Calu3 (cell line): ENCODE measurements at regions of chr7 and their contacts with region 1.

Region 1: DNA sequence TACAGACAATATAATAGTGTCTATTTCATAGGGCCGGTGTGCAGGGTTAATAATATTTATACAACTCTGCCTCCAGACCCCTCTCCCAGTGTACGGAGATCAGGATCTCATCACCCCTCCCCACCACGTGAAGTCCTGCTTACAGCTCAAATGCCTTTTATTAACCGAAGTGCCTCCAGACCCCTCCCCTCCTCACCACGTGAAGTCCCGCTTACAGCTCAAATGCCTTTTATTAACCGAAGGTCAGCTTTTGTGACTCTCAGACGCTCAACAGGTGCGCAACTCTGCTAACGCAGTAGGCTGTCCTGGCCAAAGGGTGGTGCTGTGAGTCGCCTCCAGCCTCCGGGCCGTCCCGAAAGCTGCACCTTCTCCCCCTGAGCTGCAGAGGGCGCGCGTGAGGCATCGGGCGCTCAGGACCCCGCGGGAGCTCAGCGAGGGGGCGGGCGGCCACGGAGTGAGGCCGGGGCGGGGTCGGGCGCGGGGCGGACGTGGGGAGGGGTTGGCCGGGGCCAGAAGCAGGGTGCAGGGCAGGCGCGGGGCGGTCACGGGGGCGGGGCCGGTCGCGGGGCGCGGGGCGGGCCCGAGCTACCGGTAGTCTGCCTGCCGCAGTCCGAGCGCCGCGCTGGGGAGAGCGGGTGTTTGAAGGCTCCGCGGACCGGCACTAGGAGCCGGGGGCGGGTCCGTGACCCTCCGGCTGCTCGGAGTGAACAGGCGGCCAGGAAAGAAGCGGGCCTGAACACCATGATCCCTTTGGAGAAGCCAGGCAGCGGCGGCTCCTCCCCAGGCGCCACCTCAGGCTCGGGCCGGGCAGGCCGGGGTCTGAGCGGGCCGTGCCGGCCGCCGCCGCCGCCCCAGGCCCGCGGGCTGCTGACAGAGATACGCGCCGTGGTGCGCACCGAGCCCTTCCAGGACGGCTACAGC is at the start of gene STK17A:
- DNase-seq: peak; percentile 98
- H3K4me3 Mint-ChIP-seq: peak within 1 kb of the TSS; percentile 92
- H3K27ac Mint-ChIP-seq: peak within 1 kb of the TSS; percentile 86
- H3K4me1 Mint-ChIP-seq: peaks cover 14% of the 10 kb centered on the region
- H3K27me3 Mint-ChIP-seq: no peaks in the 10 kb centered on the region
- CTCF ChIP-seq: peak; percentile 99
- total RNA-seq, gene STK17A: 35.9 and 53.5 TPM in 2 replicates

Region 2: DNA sequence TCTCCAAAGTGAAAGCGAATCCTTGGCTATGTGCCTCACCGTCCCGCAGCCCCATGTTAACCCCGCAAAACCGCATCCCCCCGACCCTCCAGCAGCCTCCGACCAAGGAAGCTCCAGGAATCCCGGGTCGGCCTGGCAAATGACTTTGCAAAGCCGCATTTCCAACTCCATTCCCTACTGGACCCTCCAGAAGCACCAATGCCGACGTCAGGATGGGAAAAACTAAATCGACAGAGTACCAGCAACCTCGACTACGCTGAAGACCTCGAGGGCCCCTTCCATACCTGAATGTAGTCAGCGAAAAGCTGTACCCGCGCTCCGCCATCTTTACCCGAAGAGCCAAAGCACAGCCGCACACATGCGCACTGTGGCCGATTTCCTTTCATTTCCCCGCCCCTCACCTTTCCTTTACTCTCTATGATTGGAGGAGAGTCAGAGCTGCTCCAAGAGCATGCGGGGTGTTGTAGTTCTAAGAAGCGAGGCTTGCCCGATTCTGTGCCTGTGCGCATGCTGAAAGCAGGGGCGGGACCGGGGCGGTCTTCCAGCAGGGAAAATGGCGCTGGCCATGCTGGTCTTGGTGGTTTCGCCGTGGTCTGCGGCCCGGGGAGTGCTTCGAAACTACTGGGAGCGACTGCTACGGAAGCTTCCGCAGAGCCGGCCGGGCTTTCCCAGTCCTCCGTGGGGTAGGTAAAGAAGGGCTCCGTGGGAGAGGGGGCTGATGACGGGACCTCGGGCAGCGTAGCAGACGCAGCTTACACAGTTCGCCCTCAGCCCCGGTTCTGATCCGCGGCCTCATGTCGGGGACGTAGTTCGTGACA is 650.7 kb before region 1 on chr7 and contains the starts of genes MRPL32 and PSMA2:
- CTCF ChIA-PET with region 1: interaction called, 12 read pairs
- intact Hi-C with region 1: no loop called
- DNase-seq: peak; percentile 98
- H3K4me3 Mint-ChIP-seq: peak within 1 kb of the TSS; percentile 100
- H3K27ac Mint-ChIP-seq: peak within 1 kb of the TSS; percentile 99
- H3K4me1 Mint-ChIP-seq: peaks cover 26% of the 10 kb centered on the region
- H3K27me3 Mint-ChIP-seq: no peaks in the 10 kb centered on the region
- CTCF ChIP-seq: no peak
- total RNA-seq, gene MRPL32: 86.4 and 87.8 TPM in 2 replicates
- total RNA-seq, gene PSMA2: 191 and 208 TPM in 2 replicates

Region 3: GRCh38 chr7:43294080-43294630 is 288.6 kb before region 1 on chr7:
- CTCF ChIA-PET with region 1: no interaction called
- intact Hi-C with region 1: no loop called
- DNase-seq: peak; percentile 23
- H3K4me3 Mint-ChIP-seq: no peak overlapping the region
- H3K27ac Mint-ChIP-seq: no peak overlapping the region
- H3K4me1 Mint-ChIP-seq: peaks cover 9% of the 10 kb centered on the region
- H3K27me3 Mint-ChIP-seq: peaks cover 39% of the 10 kb centered on the region
- CTCF ChIP-seq: no peak

Region 4: GRCh38 chr7:43454936-43455518 is 127.7 kb before region 1 on chr7:
- CTCF ChIA-PET with region 1: interaction called, 14 read pairs
- intact Hi-C with region 1: no loop called
- DNase-seq: peak; percentile 25
- H3K4me3 Mint-ChIP-seq: no peak overlapping the region
- H3K27ac Mint-ChIP-seq: no peak overlapping the region
- H3K4me1 Mint-ChIP-seq: peaks cover 10% of the 10 kb centered on the region
- H3K27me3 Mint-ChIP-seq: no peaks in the 10 kb centered on the region
- CTCF ChIP-seq: peak; percentile 66

Region 5: GRCh38 chr7:43562383-43562782 is 20.4 kb before region 1 on chr7:
- CTCF ChIA-PET with region 1: no interaction called
- intact Hi-C with region 1: no loop called
- DNase-seq: no peak
- H3K4me3 Mint-ChIP-seq: no peak overlapping the region
- H3K27ac Mint-ChIP-seq: no peak overlapping the region
- H3K4me1 Mint-ChIP-seq: peaks cover 11% of the 10 kb centered on the region
- H3K27me3 Mint-ChIP-seq: no peaks in the 10 kb centered on the region
- CTCF ChIP-seq: no peak

Region 6: GRCh38 chr7:43572516-43573049 is 10.2 kb before region 1 on chr7:
- CTCF ChIA-PET with region 1: interaction called, 28 read pairs
- intact Hi-C with region 1: no loop called
- DNase-seq: peak; percentile 41
- H3K4me3 Mint-ChIP-seq: no peak overlapping the region
- H3K27ac Mint-ChIP-seq: peak overlapping the region; percentile 55
- H3K4me1 Mint-ChIP-seq: no peaks in the 10 kb centered on the region
- H3K27me3 Mint-ChIP-seq: no peaks in the 10 kb centered on the region
- CTCF ChIP-seq: no peak

Region 7: DNA sequence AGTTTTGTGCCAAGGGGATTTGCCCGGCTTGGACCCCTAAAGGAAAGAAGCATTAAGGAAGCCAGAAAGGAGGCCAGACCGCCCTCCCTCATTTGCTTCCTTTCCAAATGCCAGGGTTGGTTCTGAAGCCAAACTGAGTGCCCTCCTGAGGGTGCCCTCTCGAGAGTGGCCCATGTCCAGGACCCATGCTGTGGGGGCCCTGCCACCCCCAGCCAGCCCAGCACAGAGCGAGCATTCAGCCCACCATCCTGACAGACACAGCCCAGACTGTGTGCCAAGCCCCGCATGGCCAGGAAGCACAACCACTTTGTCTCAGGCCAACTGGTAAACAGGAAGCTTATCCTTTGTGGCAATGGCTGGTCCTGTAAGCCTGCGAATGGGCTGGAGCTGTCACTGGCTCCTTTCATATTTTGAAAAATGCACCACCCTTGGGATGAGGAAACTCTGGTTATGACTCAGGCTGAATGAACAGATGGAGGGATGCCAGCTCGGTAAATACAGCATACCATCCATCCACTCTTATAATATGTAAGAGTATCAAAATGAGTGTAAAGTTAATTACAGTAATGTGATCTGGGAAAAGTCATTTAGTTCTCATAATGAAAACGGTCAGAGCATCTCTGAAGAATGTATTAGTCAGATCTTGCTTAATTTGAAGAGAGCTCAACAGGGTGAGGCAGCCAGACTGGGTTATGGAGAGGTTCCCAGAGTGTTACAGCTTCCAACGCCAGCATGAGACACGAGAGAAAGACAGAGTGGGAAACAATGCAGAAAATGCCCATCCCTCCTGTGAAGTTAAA is 65.1 kb after region 1 on chr7:
- CTCF ChIA-PET with region 1: interaction called, 37 read pairs
- intact Hi-C with region 1: loop called (anchors 5 kb)
- DNase-seq: peak; percentile 88
- H3K4me3 Mint-ChIP-seq: peak overlapping the region; percentile 38
- H3K27ac Mint-ChIP-seq: peak overlapping the region; percentile 90
- H3K4me1 Mint-ChIP-seq: peaks cover 53% of the 10 kb centered on the region
- H3K27me3 Mint-ChIP-seq: no peaks in the 10 kb centered on the region
- CTCF ChIP-seq: no peak

Region 8: GRCh38 chr7:43721193-43721806 is 138.5 kb after region 1 on chr7:
- CTCF ChIA-PET with region 1: interaction called, 27 read pairs
- intact Hi-C with region 1: loop called (anchors 1 kb)
- DNase-seq: peak; percentile 28
- H3K4me3 Mint-ChIP-seq: no peak overlapping the region
- H3K27ac Mint-ChIP-seq: no peak overlapping the region
- H3K4me1 Mint-ChIP-seq: peaks cover 18% of the 10 kb centered on the region
- H3K27me3 Mint-ChIP-seq: no peaks in the 10 kb centered on the region
- CTCF ChIP-seq: peak; percentile 67